ENCODE measurements at regions of chr20 and their contacts with region 1.

Region 1: GRCh38 chr20:31822421-31823330 is 3.5 kb downstream of the MYLK2 start:
- DNase-seq: peak; percentile 79 to 86
- ATAC-seq: peak; percentile 83 to 98 (median 97)
- H3K4me3 ChIP-seq: no peak overlapping the region
- H3K4me3 Mint-ChIP-seq: no peak overlapping the region
- H3K27ac ChIP-seq: no peak overlapping the region
- H3K27ac Mint-ChIP-seq: no peak overlapping the region
- H3K4me1 ChIP-seq: peaks cover 7% of the 10 kb centered on the region
- H3K4me1 Mint-ChIP-seq: peaks cover 0 to 6% of the 10 kb centered on the region in 2 donors
- H3K27me3 ChIP-seq: no peaks in the 10 kb centered on the region
- H3K27me3 Mint-ChIP-seq: peaks cover 0 to 4% of the 10 kb centered on the region in 2 donors
- CTCF ChIP-seq: peak; percentile 99

Region 2: DNA sequence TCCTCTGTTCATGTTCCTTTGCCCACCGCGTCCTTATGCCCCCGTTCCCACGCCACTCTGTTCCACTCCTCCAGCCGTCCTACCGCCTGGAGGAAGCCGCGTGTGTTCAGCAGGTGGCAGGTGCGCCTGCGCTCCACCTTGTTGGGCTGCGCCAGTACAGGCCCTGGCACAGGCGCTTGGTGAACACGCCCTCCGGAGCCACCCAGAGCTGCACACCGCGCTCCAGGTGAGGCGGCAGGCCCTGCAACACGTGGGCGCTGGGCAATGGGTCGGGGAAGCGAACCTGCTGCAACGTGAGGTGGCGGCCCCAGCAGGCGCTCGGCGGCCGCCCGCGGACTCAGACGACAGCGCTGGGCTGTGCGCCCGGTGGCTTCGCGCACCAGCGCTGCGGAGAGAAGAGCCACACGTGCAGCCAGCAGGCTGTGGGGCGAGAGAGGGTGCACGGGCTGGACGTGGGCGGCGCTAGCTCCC is 26.8 kb after region 1 on chr20:
- intact Hi-C with region 1: loop called (anchors 1 kb)
- DNase-seq: no peak
- ATAC-seq: no peak
- H3K4me3 ChIP-seq: no peak overlapping the region
- H3K4me3 Mint-ChIP-seq: no peak overlapping the region
- H3K27ac ChIP-seq: no peak overlapping the region
- H3K27ac Mint-ChIP-seq: no peak overlapping the region
- H3K4me1 ChIP-seq: peaks cover 4% of the 10 kb centered on the region
- H3K4me1 Mint-ChIP-seq: no peaks in the 10 kb centered on the region
- H3K27me3 ChIP-seq: no peaks in the 10 kb centered on the region
- H3K27me3 Mint-ChIP-seq: peaks cover 12 to 18% of the 10 kb centered on the region in 2 donors
- CTCF ChIP-seq: no peak

Region 3: GRCh38 chr20:31951530-31952453 is 129.1 kb after region 1 on chr20 and contains the start of gene PDRG1:
- intact Hi-C with region 1: loop called (anchors 2 kb)
- DNase-seq: peak; percentile 99
- ATAC-seq: peak; percentile 98 to 99 (median 99)
- H3K4me3 ChIP-seq: peak within 1 kb of the TSS; percentile 92
- H3K4me3 Mint-ChIP-seq: peak within 1 kb of the TSS; percentile 99
- H3K27ac ChIP-seq: peak within 1 kb of the TSS; percentile 62
- H3K27ac Mint-ChIP-seq: peak within 1 kb of the TSS; percentile 91 to 98
- H3K4me1 ChIP-seq: peaks cover 16% of the 10 kb centered on the region
- H3K4me1 Mint-ChIP-seq: peaks cover 35% of the 10 kb centered on the region in 2 donors
- H3K27me3 ChIP-seq: no peaks in the 10 kb centered on the region
- H3K27me3 Mint-ChIP-seq: peaks cover 15 to 23% of the 10 kb centered on the region in 2 donors
- CTCF ChIP-seq: peak; percentile 85
- total RNA-seq, gene PDRG1: 9.0 to 12.8 (median 10.4) TPM

Region 4: DNA sequence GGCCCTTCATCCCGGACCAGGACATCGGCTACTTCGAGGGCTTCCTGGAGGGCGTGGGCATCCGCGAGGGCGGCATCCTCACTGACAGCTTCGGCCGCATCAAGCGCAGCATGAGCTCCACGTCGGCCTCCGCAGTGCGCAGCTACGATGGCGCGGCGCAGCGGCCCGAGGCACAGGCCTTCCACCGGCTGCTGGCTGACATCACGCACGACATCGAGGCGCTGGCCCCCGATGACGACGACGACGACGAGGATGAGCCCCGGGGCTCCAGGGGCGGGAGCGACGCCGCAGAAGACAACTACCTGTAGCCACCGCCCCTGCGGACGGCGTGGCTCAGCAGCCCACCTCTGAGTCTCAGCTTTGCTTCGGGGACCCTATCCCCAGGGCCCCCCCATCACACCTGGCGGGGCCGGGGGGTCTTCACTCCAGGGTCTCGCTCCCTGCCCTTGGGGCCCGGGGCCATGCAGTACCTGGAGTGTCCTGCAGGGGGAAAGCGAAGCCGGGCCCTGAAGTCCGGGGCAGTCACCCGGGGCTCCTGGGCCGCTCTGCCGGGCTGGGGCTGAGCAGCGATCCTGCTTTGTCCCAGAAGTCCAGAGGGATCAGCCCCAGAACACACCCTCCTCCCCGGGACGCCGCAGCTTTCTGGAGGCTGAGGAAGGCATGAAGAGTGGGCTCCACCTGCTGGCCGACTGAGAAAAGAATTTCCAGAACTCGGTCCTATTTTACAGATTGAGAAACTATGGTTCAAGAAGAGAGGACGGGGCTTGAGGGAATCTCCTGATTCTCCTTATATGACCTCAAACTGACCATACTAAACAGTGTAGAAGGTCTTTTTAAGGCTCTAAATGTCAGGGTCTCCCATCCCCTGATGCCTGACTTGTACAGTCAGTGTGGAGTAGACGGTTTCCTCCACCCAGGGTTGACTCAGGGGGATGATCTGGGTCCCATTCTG is 208.6 kb after region 1 on chr20:
- intact Hi-C with region 1: loop called (anchors 1 kb)
- DNase-seq: peak; percentile 46 to 75
- ATAC-seq: peak; percentile 56 to 85 (median 78)
- H3K4me3 ChIP-seq: no peak overlapping the region
- H3K4me3 Mint-ChIP-seq: no peak overlapping the region
- H3K27ac ChIP-seq: no peak overlapping the region
- H3K27ac Mint-ChIP-seq: no peak overlapping the region
- H3K4me1 ChIP-seq: peaks cover 14% of the 10 kb centered on the region
- H3K4me1 Mint-ChIP-seq: no peaks in the 10 kb centered on the region
- H3K27me3 ChIP-seq: peaks cover 11% of the 10 kb centered on the region
- H3K27me3 Mint-ChIP-seq: peaks cover 23 to 58% of the 10 kb centered on the region in 2 donors
- CTCF ChIP-seq: peak; percentile 100

Region 5: DNA sequence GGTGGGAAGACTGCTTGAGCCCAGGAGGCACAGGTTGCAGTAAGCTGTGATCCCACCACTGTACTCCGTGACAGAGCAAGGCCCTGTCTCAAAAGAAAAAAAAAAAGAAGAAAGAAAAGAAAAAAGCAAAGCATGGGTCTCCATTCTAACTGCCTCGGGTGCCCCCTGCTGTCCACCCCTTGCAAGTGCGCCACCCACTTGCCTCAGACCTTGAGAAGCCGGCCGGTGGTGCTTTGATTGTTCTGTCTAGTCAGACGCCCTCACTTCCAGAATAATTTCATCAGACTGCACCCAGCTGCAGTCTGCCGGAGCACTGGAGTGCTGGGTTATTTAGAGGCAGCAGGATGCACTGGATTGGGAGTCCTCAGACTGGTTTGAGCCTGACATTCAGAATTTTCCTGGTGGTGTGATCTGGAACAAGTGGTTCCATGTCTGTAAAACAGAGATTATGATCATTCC is 269.2 kb after region 1 on chr20:
- intact Hi-C with region 1: loop called (anchors 1 kb)
- DNase-seq: peak; percentile 61 to 81
- ATAC-seq: peak; percentile 85 to 94 (median 88)
- H3K4me3 ChIP-seq: no peak overlapping the region
- H3K4me3 Mint-ChIP-seq: no peak overlapping the region
- H3K27ac ChIP-seq: no peak overlapping the region
- H3K27ac Mint-ChIP-seq: no peak overlapping the region
- H3K4me1 ChIP-seq: no peaks in the 10 kb centered on the region
- H3K4me1 Mint-ChIP-seq: peaks cover 0 to 4% of the 10 kb centered on the region in 2 donors
- H3K27me3 ChIP-seq: no peaks in the 10 kb centered on the region
- H3K27me3 Mint-ChIP-seq: peaks cover 6 to 25% of the 10 kb centered on the region in 2 donors
- CTCF ChIP-seq: peak; percentile 86

Region 6: GRCh38 chr20:32652739-32653526 is 830.3 kb after region 1 on chr20:
- intact Hi-C with region 1: loop called (anchors 5 kb)
- DNase-seq: peak; percentile 87 to 91
- ATAC-seq: peak; percentile 93 to 99 (median 99)
- H3K4me3 ChIP-seq: no peak overlapping the region
- H3K4me3 Mint-ChIP-seq: no peak overlapping the region
- H3K27ac ChIP-seq: no peak overlapping the region
- H3K27ac Mint-ChIP-seq: no peak overlapping the region
- H3K4me1 ChIP-seq: peaks cover 19% of the 10 kb centered on the region
- H3K4me1 Mint-ChIP-seq: peaks cover 7 to 13% of the 10 kb centered on the region in 2 donors
- H3K27me3 ChIP-seq: no peaks in the 10 kb centered on the region
- H3K27me3 Mint-ChIP-seq: no peaks in the 10 kb centered on the region
- CTCF ChIP-seq: peak; percentile 87

Region 7: DNA sequence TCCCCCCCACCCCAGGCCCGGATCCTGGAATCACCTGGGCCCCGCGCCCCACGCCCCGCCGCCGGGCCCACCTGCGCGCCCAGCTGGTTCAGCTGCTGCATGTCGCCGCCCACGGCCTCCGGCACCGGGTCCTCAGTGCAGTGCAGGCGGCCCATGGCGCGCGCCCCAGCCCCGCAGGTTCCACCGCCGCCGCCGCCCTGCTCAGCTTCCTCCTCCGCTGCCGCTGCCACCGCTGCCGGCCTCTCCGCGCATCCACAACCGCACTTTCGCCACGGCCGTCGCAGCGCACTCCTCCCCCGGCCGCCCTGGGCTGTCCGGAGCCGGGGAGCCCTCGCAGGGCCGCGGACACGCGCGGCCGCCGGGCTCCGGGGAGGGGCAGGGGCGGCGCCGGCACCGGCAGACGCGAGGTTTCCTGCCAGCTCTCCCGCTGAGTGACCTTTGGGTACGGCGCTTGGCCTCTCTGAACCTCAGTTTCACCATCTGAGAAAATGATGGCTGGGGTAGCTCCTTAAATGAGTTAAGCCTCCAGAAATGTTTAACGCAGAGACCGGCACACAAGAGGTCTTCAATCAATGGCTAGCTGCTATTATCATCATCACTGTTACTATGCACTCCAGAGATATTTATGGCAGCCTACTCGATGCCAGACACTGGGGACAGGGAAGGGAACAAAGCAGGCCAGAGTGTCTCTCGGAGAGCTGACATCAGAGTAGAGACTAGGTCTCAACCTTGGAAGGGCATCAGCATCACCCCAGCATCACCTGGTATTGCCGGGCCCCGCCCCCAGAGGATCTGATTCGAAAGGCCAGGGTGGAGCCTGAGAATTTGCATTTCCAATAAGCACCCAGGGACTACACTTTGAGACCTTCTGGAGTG is 920.8 kb after region 1 on chr20 and contains the start of gene COMMD7:
- intact Hi-C with region 1: no loop called
- DNase-seq: peak; percentile 54 to 74
- ATAC-seq: peak; percentile 66 to 86 (median 84)
- H3K4me3 ChIP-seq: peak within 1 kb of the TSS; percentile 86
- H3K4me3 Mint-ChIP-seq: peak within 1 kb of the TSS; percentile 98
- H3K27ac ChIP-seq: peak within 1 kb of the TSS; percentile 90
- H3K27ac Mint-ChIP-seq: peak within 1 kb of the TSS; percentile 94 to 99
- H3K4me1 ChIP-seq: peaks cover 26% of the 10 kb centered on the region
- H3K4me1 Mint-ChIP-seq: peaks cover 29 to 37% of the 10 kb centered on the region in 2 donors
- H3K27me3 ChIP-seq: no peaks in the 10 kb centered on the region
- H3K27me3 Mint-ChIP-seq: no peaks in the 10 kb centered on the region
- CTCF ChIP-seq: no peak
- total RNA-seq, gene COMMD7: 56.7 to 72.1 (median 68.1) TPM